ENCODE measurements at regions of chr3 and their contacts with region 1.

Region 1: DNA sequence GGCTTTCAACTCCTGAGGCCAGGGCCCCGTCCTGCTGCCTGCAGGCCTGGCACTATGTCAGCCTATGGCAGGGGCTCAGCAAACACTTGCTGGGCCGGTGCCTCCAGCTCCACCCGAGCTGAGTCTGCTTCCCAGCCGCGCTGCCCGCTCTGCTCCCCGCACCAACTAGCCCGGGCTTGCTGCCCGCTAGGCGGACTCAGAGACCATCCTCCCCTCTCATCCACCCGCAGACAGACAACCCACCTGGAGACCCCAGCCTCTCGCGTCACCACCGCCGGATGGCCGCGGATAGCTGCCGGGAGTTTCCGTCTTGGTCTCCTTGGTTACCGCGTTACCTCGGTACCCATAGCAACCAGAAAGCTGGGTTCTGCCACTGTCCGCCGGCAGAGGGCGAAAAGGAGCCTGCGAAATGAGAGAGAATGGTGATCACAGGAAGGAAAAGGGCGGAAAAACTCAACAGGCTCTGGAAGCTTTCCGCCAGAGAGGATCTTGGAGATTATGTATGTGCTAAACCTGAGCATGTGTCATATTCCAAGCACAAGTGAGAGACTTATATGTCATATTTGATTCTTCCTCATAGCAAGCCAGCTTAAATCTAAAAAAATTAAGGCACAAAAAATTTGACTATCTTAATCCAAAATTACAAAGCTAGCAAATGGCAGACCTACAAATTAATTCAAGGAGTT is at the start of gene ZBBX:
- DNase-seq: peak; percentile 64 to 89 (median 80)
- ATAC-seq: peak; percentile 94
- H3K4me3 ChIP-seq: peak within 1 kb of the TSS; percentile 28 to 46
- H3K4me3 Mint-ChIP-seq: peak within 1 kb of the TSS; percentile 81
- H3K27ac ChIP-seq: peak within 1 kb of the TSS in 1 of 2 experiments; percentile 44
- H3K27ac Mint-ChIP-seq: peak within 1 kb of the TSS; percentile 70
- H3K4me1 ChIP-seq: peaks cover 4% of the 10 kb centered on the region
- H3K4me1 Mint-ChIP-seq: peaks cover 11% of the 10 kb centered on the region
- H3K27me3 ChIP-seq: no peaks in the 10 kb centered on the region
- H3K27me3 Mint-ChIP-seq: peaks cover 2% of the 10 kb centered on the region
- CTCF ChIP-seq: peak; percentile 76
- total RNA-seq, gene ZBBX: not detected

Region 2: DNA sequence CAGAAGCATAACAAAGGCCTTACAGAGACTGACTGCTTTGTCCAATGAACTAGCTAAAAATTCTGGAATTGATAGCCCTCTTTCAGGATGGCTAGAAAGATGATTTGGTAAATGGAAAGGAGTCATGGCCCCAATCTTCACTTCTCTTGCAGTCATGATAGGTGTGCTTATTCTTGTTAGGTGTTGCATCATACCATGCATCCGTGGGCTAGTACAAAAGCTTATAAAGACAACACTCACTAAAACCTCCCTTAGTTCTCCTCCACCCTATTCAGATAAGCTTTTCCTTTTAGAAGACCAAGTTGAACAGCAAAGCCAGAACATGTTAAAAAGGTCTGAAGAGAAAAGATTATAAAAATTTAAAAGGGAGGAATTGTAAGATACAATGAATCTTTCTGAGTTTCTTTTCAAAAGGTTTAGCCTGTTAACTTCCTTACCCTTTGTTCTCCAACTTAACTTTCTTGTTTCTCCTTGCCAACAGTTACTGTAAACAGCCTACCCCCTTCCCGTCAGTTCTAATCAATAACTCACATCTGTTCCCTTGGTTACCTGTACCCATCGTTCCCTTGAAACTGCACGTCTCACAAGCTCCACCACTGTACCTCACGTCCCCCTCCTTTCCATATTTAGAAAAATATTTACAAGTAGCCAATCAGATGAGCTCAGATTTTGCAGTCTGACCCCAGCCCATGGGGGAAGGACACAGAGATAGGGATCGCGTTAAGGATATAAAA is 105.8 kb before region 1 on chr3:
- CTCF ChIA-PET with region 1: no interaction called
- POLR2A ChIA-PET with region 1: no interaction called
- intact Hi-C with region 1: no loop called
- DNase-seq: no peak
- ATAC-seq: no peak
- H3K4me3 ChIP-seq: no peak overlapping the region
- H3K4me3 Mint-ChIP-seq: no peak overlapping the region
- H3K27ac ChIP-seq: no peak overlapping the region
- H3K27ac Mint-ChIP-seq: no peak overlapping the region
- H3K4me1 ChIP-seq: no peaks in the 10 kb centered on the region
- H3K4me1 Mint-ChIP-seq: no peaks in the 10 kb centered on the region
- H3K27me3 ChIP-seq: no peaks in the 10 kb centered on the region
- H3K27me3 Mint-ChIP-seq: no peaks in the 10 kb centered on the region
- CTCF ChIP-seq: no peak

Region 3: DNA sequence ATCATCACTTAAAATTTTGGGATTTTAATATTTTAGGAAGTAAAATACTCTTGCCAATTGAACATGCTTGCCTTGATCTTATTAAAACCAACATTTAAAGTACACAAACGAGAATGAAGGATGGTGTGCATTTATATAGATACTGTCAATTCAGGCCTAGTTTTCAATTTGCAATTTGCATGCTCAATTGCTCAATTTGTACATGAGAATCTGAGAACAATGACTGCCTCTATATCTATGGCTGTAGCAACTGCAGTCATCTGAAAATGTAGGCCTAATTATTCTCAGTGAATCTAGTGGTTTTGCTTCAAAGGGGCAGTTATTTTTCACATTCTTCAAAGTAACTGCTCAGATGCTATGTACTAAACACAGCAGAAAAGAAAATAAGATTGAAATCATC is 18.8 kb before region 1 on chr3:
- CTCF ChIA-PET with region 1: interaction called, 13 read pairs
- POLR2A ChIA-PET with region 1: no interaction called
- intact Hi-C with region 1: no loop called
- DNase-seq: no peak
- ATAC-seq: no peak
- H3K4me3 ChIP-seq: no peak overlapping the region
- H3K4me3 Mint-ChIP-seq: no peak overlapping the region
- H3K27ac ChIP-seq: no peak overlapping the region
- H3K27ac Mint-ChIP-seq: no peak overlapping the region
- H3K4me1 ChIP-seq: no peaks in the 10 kb centered on the region
- H3K4me1 Mint-ChIP-seq: no peaks in the 10 kb centered on the region
- H3K27me3 ChIP-seq: no peaks in the 10 kb centered on the region
- H3K27me3 Mint-ChIP-seq: no peaks in the 10 kb centered on the region
- CTCF ChIP-seq: no peak

Region 4: DNA sequence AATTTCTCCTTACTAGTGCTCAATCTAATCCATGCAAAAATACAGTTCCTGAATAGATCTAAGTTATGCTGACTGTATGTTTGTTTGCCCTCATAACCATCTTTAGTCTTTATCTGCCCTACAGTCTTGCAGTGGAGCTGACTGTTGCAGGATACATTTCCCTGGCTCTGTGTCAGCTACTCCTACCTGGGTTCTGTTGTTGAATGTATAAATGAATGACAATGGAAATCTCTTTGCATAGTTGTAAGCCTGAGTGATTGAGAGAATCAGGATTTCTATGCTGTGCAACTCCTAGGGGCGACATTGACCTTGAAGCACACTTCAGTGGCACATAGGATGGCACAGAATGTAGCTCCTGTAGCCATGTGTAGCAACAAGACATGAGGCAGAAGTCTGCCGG is 15.9 kb after region 1 on chr3:
- CTCF ChIA-PET with region 1: no interaction called
- POLR2A ChIA-PET with region 1: no interaction called
- intact Hi-C with region 1: no loop called
- DNase-seq: no peak
- ATAC-seq: no peak
- H3K4me3 ChIP-seq: no peak overlapping the region
- H3K4me3 Mint-ChIP-seq: no peak overlapping the region
- H3K27ac ChIP-seq: no peak overlapping the region
- H3K27ac Mint-ChIP-seq: no peak overlapping the region
- H3K4me1 ChIP-seq: no peaks in the 10 kb centered on the region
- H3K4me1 Mint-ChIP-seq: no peaks in the 10 kb centered on the region
- H3K27me3 ChIP-seq: peaks cover 0 to 2% of the 10 kb centered on the region in 2 experiments
- H3K27me3 Mint-ChIP-seq: peaks cover 6% of the 10 kb centered on the region
- CTCF ChIP-seq: no peak

Region 5: DNA sequence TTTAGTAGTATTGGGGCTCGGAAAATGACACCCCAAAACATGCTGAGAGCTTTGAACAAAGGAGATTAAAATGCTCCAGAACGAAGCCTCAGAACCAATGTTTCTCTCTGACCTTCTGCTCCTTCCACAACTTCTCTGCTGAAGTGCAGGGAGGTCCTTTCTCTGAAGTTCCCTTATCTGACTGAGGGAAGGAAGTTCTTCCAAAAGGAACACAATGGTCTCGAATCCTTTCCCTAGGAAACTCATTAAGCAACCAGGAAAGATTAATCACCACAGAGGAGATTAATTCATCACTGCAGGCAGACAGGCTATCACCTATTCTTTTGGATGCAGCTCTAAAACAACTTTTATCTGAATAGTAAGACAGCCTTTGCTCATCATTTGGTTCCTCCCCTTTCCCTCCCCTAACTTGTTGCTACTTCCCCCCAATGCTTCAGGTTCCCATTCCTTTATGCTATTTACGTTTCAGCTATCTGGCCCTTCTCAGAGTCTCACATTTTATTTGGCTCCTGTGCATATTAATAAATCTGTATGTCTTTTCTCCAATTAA is 291.8 kb after region 1 on chr3:
- CTCF ChIA-PET with region 1: no interaction called
- POLR2A ChIA-PET with region 1: no interaction called
- intact Hi-C with region 1: no loop called
- DNase-seq: no peak
- ATAC-seq: no peak
- H3K4me3 ChIP-seq: no peak overlapping the region
- H3K4me3 Mint-ChIP-seq: no peak overlapping the region
- H3K27ac ChIP-seq: no peak overlapping the region
- H3K27ac Mint-ChIP-seq: no peak overlapping the region
- H3K4me1 ChIP-seq: no peaks in the 10 kb centered on the region
- H3K4me1 Mint-ChIP-seq: no peaks in the 10 kb centered on the region
- H3K27me3 ChIP-seq: no peaks in the 10 kb centered on the region
- H3K27me3 Mint-ChIP-seq: no peaks in the 10 kb centered on the region
- CTCF ChIP-seq: no peak

Region 6: DNA sequence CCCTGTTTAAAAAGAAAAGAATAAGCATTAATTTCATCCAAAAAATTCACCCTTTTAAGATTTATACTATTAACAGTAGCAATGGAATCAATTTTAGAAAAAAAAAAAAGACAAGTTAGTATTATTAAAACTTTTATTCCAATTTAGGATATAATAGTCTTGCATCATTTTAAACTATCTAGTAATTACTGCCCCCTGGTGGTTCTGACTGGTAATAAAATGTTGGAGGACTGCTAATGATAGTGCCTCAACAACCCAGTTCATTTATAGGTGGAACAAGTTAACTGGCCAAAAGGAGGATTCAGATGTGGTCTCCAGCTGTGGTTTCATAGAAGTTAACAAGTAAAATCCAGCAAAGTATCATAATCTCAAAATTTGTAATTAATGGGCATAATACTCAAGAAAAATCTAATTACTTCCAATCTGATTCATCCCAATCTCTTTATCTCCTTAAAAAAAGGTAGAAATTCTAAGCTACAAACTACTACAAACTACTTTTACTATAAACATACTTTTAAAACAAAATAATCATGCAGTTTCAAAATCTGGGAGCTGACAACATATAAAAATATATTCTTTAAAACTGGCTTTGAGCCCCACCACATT is 304.3 kb after region 1 on chr3:
- CTCF ChIA-PET with region 1: interaction called, 8 read pairs
- POLR2A ChIA-PET with region 1: no interaction called
- intact Hi-C with region 1: loop called (anchors 1 to 2 kb)
- DNase-seq: peak in 7 of 9 experiments; percentile 6 to 73 (median 31)
- ATAC-seq: peak; percentile 82
- H3K4me3 ChIP-seq: no peak overlapping the region
- H3K4me3 Mint-ChIP-seq: no peak overlapping the region
- H3K27ac ChIP-seq: no peak overlapping the region
- H3K27ac Mint-ChIP-seq: no peak overlapping the region
- H3K4me1 ChIP-seq: no peaks in the 10 kb centered on the region
- H3K4me1 Mint-ChIP-seq: peaks cover 2% of the 10 kb centered on the region
- H3K27me3 ChIP-seq: no peaks in the 10 kb centered on the region
- H3K27me3 Mint-ChIP-seq: no peaks in the 10 kb centered on the region
- CTCF ChIP-seq: peak; percentile 93

Region 7: DNA sequence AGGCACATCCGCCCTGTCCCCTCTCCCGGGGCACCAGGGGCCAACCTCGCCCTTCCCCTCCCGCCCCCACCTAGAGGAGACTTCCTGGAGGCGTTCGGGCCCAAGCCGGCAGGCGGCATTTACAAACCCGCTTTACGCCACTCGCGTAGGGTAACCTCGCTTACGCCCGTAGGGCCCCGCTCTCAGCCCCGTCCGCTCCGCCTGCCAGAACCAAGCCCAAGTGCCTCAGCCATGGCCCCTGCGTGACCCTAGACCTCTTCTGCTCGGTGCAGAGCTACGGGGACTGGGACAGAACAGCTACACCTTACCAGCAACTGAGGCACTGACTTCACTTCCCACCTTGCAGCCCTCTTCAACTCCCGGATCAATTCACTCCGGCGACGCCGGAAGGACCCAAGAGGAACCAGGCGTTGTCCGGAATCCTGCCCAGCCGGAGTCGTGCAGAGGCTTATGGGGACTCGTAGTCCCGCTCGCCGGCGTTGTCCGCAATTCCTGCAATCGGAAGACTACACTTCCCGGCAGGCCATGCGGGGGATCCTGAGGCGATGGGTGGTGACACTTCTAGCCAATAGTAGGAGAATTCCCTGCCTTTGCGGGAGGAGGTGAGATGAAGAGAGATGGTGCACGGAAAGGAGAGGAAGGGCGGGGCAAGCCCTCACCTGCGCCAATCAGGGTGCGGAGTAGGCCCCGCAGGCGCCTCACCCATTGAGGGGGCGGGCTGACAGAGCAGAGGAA is 354.5 kb after region 1 on chr3 and contains the start of gene PDCD10:
- CTCF ChIA-PET with region 1: no interaction called
- POLR2A ChIA-PET with region 1: no interaction called
- intact Hi-C with region 1: loop called in 1 of 2 experiments (anchors 1 kb)
- DNase-seq: peak; percentile 89 to 99 (median 96)
- ATAC-seq: peak; percentile 85
- H3K4me3 ChIP-seq: peak within 1 kb of the TSS; percentile 60 to 95
- H3K4me3 Mint-ChIP-seq: no peak within 1 kb of the TSS
- H3K27ac ChIP-seq: peak within 1 kb of the TSS; percentile 50 to 90
- H3K27ac Mint-ChIP-seq: no peak within 1 kb of the TSS
- H3K4me1 ChIP-seq: peaks cover 29% of the 10 kb centered on the region
- H3K4me1 Mint-ChIP-seq: peaks cover 36% of the 10 kb centered on the region
- H3K27me3 ChIP-seq: no peaks in the 10 kb centered on the region
- H3K27me3 Mint-ChIP-seq: no peaks in the 10 kb centered on the region
- CTCF ChIP-seq: no peak
- total RNA-seq, gene PDCD10: 24.7 to 27.6 TPM

Region 8: DNA sequence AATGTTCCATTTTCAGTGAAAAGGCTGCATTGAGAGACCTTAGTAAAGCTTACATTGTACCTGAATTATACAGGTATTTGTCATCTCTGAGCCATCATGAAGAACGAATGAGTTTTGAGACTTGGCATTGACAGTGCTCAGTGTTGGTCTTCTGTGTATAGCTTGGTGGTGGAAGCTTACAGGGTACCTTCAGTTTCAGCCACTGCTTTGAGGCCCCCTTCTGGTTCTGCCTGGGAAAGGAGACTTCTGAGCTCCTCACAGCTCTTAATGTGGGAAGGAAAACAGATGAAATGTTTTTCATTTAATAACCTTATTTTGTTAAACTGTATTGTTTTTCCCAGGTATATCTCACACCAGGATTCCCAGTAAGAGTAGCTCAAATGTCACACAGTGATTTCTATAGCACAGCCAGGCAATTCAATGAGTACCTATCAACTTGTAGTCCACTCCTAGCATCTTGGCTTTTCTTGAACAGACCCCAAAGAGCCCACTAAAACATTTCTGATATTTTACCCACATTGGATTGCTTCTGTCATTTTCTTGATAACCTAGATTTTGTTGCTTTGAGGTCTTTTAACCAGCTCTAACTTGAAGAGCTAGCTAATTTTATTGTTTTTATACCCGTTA is 360.9 kb after region 1 on chr3:
- CTCF ChIA-PET with region 1: interaction called, 4 read pairs
- POLR2A ChIA-PET with region 1: interaction called, 3 read pairs
- intact Hi-C with region 1: loop called in 1 of 2 experiments (anchors 5 kb)
- DNase-seq: peak in 7 of 9 experiments; percentile 12 to 54 (median 37)
- ATAC-seq: peak; percentile 86
- H3K4me3 ChIP-seq: no peak overlapping the region
- H3K4me3 Mint-ChIP-seq: no peak overlapping the region
- H3K27ac ChIP-seq: no peak overlapping the region
- H3K27ac Mint-ChIP-seq: no peak overlapping the region
- H3K4me1 ChIP-seq: peaks cover 8% of the 10 kb centered on the region
- H3K4me1 Mint-ChIP-seq: peaks cover 18% of the 10 kb centered on the region
- H3K27me3 ChIP-seq: no peaks in the 10 kb centered on the region
- H3K27me3 Mint-ChIP-seq: no peaks in the 10 kb centered on the region
- CTCF ChIP-seq: peak; percentile 42

Region 9: GRCh38 chr3:167882067-167882667 is 502.0 kb after region 1 on chr3:
- CTCF ChIA-PET with region 1: interaction called, 25 read pairs
- POLR2A ChIA-PET with region 1: no interaction called
- intact Hi-C with region 1: loop called (anchors 1 kb)
- DNase-seq: peak in 2 of 9 experiments; percentile 39 to 59
- ATAC-seq: peak; percentile 51
- H3K4me3 ChIP-seq: no peak overlapping the region
- H3K4me3 Mint-ChIP-seq: no peak overlapping the region
- H3K27ac ChIP-seq: no peak overlapping the region
- H3K27ac Mint-ChIP-seq: no peak overlapping the region
- H3K4me1 ChIP-seq: no peaks in the 10 kb centered on the region
- H3K4me1 Mint-ChIP-seq: peaks cover 6% of the 10 kb centered on the region
- H3K27me3 ChIP-seq: no peaks in the 10 kb centered on the region
- H3K27me3 Mint-ChIP-seq: peaks cover 11% of the 10 kb centered on the region
- CTCF ChIP-seq: peak; percentile 67

Measured in CD8-positive, alpha-beta T cell (primary cell).